Naive thymus-derived CD4-positive, alpha-beta T cell (primary cell): ENCODE measurements at regions of chr19 and their contacts with region 1.

Region 1: GRCh38 chr19:38769635-38770211 is 3.6 kb downstream of the LGALS7 start:
- DNase-seq: peak; percentile 81 to 97 (median 86)
- ATAC-seq: peak; percentile 93
- H3K4me3 ChIP-seq: peak overlapping the region; percentile 33
- H3K4me3 Mint-ChIP-seq: peak overlapping the region; percentile 30 to 74 (median 61)
- H3K27ac ChIP-seq: peak overlapping the region; percentile 52
- H3K27ac Mint-ChIP-seq: peak overlapping the region; percentile 56 to 90 (median 83)
- H3K4me1 ChIP-seq: peaks cover 0 to 5% of the 10 kb centered on the region in 2 donors
- H3K4me1 Mint-ChIP-seq: peaks cover 0 to 10% (median 6%) of the 10 kb centered on the region in 7 donors
- H3K27me3 ChIP-seq: no peaks in the 10 kb centered on the region
- H3K27me3 Mint-ChIP-seq: no peaks in the 10 kb centered on the region

Region 2: DNA sequence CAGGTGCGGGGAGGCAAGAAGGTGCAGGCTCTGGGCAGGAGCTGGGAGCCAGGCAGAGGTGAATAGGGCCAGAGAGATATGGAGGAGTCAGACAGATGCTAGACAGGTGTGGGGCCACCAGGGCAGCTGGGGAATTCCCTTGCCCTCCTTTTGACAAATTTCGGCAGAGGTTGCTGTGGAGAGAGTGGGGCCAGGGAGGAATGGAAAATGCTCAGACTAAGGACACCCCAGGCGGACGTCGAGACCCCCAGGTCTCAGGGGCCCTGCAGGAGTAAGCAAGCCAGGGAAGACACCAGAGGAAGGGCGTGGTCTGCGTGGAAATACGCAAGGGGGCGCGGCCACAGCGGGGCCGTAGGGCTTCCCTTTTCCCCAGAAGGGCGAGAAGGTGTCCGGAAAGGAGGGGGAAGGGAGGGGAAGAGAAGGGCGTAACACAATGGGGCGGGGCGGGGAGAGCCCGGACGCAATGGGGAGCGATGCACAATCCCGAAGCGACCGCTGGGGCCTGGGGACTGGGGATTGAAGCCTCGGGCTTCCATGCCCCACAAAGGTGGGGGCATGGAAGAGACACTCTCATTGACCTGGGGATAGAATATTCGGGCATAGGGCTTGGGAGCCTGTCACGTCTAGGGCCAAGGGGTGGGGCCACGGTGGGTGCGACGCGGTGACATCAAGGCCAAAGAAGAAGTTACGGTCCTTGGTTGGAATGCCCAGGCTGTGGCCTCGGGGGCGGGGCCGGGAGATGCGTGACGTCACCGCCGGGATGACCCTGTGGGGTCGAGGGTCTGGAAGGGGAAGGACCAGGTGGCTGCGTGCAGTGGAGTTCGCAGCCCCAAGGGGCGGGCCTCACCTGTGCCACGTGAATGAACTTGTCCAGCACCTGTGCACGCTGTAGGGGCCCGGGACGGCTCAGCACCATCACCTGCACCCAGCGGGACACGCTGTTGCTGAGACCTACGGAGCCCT is 351.9 kb before region 1 on chr19:
- CTCF ChIA-PET with region 1: no interaction called
- POLR2A ChIA-PET with region 1: no interaction called
- intact Hi-C with region 1: no loop called
- DNase-seq: peak in 8 of 9 donors; percentile 18 to 66 (median 26)
- ATAC-seq: peak; percentile 94
- H3K4me3 ChIP-seq: peak overlapping the region; percentile 55
- H3K4me3 Mint-ChIP-seq: peak overlapping the region; percentile 83 to 96 (median 86)
- H3K27ac ChIP-seq: peak overlapping the region; percentile 30
- H3K27ac Mint-ChIP-seq: peak overlapping the region; percentile 57 to 82 (median 71)
- H3K4me1 ChIP-seq: peaks cover 12 to 13% of the 10 kb centered on the region in 2 donors
- H3K4me1 Mint-ChIP-seq: peaks cover 20 to 23% (median 22%) of the 10 kb centered on the region in 7 donors
- H3K27me3 ChIP-seq: no peaks in the 10 kb centered on the region
- H3K27me3 Mint-ChIP-seq: peaks cover 0 to 2% (median 0%) of the 10 kb centered on the region in 5 donors

Region 3: GRCh38 chr19:38736413-38737280 is 33.1 kb before region 1 on chr19:
- CTCF ChIA-PET with region 1: interaction called, 4 read pairs
- POLR2A ChIA-PET with region 1: interaction called, 7 read pairs
- intact Hi-C with region 1: loop called in 1 of 2 experiments (anchors 2 kb)
- DNase-seq: peak in 6 of 9 donors; percentile 31 to 69 (median 41)
- ATAC-seq: peak; percentile 63
- H3K4me3 ChIP-seq: peak overlapping the region; percentile 24
- H3K4me3 Mint-ChIP-seq: peak overlapping the region; percentile 35 to 83 (median 62)
- H3K27ac ChIP-seq: no peak overlapping the region
- H3K27ac Mint-ChIP-seq: peak overlapping the region in 5 of 9 donors; percentile 13 to 76 (median 36)
- H3K4me1 ChIP-seq: peaks cover 15 to 27% of the 10 kb centered on the region in 2 donors
- H3K4me1 Mint-ChIP-seq: peaks cover 7 to 47% (median 29%) of the 10 kb centered on the region in 7 donors
- H3K27me3 ChIP-seq: no peaks in the 10 kb centered on the region
- H3K27me3 Mint-ChIP-seq: peaks cover 0 to 10% (median 0%) of the 10 kb centered on the region in 5 donors

Region 4: DNA sequence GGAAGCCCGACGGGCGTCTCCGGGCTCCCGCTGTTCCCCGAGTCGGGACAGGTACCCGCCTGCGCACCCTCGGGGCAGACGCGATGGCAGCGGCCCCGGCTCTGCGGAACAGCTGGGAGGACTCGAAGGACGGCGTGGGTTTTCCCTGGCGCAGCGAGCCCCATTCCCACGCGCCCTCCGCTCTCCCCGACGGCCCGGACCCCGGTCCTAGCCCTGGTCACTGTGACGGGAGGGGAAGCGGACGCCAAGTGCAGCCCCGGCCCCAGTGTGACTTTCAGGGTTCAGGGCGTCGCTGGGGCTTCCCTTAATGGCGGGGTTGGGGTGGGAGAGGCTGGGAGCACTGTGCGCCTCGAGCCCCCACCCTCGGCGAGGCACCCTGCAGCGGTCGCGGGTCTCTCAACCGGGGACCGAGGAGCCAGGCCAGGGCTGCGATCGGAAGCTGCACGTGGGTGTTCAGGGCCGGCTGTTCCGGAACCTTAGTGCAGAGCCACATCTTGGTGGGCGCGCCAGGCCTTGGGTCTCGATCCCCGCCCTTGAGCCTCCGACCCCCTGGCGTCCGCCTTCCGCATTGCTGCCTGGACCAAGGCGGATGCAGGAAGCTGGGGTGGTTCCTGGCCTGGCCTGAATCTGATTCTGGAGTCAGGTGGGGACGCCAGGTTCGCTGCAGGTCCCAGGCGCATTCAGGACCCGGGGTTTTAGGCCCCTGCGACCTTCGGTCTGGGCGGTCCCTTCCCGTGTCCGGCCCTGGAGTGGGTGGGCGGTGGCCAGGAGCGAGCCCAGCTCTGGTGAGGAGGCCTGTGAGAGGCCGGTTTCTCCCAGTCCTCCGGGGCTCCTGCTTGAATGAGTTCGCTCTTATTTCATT is 22.8 kb after region 1 on chr19:
- CTCF ChIA-PET with region 1: interaction called, 3 read pairs
- POLR2A ChIA-PET with region 1: no interaction called
- intact Hi-C with region 1: loop called (anchors 2 kb)
- DNase-seq: peak in 6 of 9 donors; percentile 5 to 35 (median 16)
- ATAC-seq: peak; percentile 35
- H3K4me3 ChIP-seq: no peak overlapping the region
- H3K4me3 Mint-ChIP-seq: peak overlapping the region; percentile 14 to 75 (median 55)
- H3K27ac ChIP-seq: no peak overlapping the region
- H3K27ac Mint-ChIP-seq: peak overlapping the region in 1 of 9 donors; percentile 26
- H3K4me1 ChIP-seq: no peaks in the 10 kb centered on the region
- H3K4me1 Mint-ChIP-seq: peaks cover 0 to 10% (median 5%) of the 10 kb centered on the region in 7 donors
- H3K27me3 ChIP-seq: no peaks in the 10 kb centered on the region
- H3K27me3 Mint-ChIP-seq: peaks cover 0 to 10% (median 0%) of the 10 kb centered on the region in 5 donors

Region 5: DNA sequence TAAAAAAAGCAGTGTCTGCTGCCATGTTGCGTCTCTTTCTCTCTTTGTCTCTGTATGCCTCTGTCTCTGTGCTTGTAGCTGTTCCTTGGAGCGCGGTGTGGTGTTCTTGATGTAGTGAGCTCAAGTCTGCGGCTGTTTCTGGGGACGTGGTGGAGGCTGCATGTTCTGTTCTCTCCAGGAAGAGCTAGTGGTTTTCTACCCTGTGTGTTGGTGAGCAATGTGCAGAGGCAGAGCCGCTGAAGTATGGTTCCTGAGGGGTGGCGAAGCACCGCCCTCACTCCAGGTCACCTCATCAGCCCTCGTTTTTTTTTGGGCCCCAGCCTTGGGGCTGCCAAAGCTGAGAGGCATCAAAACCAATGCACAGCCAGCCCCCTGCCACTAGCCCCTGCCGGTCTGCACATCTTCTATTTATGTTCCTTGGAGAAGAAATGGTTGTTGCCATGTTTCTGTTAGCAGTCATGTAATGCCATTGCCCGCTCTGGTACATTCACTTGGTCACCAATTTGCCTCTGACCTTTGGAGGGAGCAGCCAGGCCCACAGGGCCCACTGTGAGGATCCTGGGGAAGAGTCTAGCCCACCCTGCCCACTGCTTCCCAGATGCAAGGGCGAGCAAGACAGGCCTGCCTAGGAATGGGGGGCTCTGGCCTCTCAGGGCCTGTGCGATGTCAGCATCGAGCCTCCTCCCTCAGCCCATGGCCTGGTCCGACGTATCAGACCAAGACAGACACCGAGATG is 72.9 kb after region 1 on chr19:
- CTCF ChIA-PET with region 1: interaction called, 3 read pairs
- POLR2A ChIA-PET with region 1: interaction called, 7 read pairs
- intact Hi-C with region 1: loop called in 1 of 2 experiments (anchors 2 kb)
- DNase-seq: peak in 6 of 9 donors; percentile 57 to 80 (median 76)
- ATAC-seq: peak; percentile 80
- H3K4me3 ChIP-seq: peak overlapping the region; percentile 24
- H3K4me3 Mint-ChIP-seq: peak overlapping the region; percentile 67 to 93 (median 83)
- H3K27ac ChIP-seq: peak overlapping the region; percentile 67
- H3K27ac Mint-ChIP-seq: peak overlapping the region; percentile 89 to 99 (median 92)
- H3K4me1 ChIP-seq: peaks cover 45 to 66% of the 10 kb centered on the region in 2 donors
- H3K4me1 Mint-ChIP-seq: peaks cover 50 to 83% (median 73%) of the 10 kb centered on the region in 7 donors
- H3K27me3 ChIP-seq: no peaks in the 10 kb centered on the region
- H3K27me3 Mint-ChIP-seq: no peaks in the 10 kb centered on the region